A549 (cell line): ENCODE measurements at regions of chr3 and their contacts with region 1.

Region 1: GRCh38 chr3:149180057-149180573 is 41.5 kb downstream of the CP start:
- DNase-seq: peak; percentile 93 to 99
- ATAC-seq: peak; percentile 97
- H3K4me3 ChIP-seq: no peak overlapping the region
- H3K27ac ChIP-seq: peak overlapping the region; percentile 78 to 86
- H3K4me1 ChIP-seq: peaks cover 28% of the 10 kb centered on the region
- CTCF ChIP-seq: no peak
- EP300 ChIP-seq: peak; percentile 87 to 93; a peak in 4 of 5 replicates
- POLR2A ChIP-seq: no peak
- RAD21 ChIP-seq: peak in 1 of 2 experiments; percentile 51; a peak in 3 of 5 replicates

Region 2: GRCh38 chr3:148971401-148972163 is 208.5 kb before region 1 on chr3:
- CTCF ChIA-PET with region 1: no interaction called
- POLR2A ChIA-PET with region 1: no interaction called
- DNase-seq: no peak
- ATAC-seq: no peak
- H3K4me3 ChIP-seq: no peak overlapping the region
- H3K27ac ChIP-seq: no peak overlapping the region
- H3K4me1 ChIP-seq: no peaks in the 10 kb centered on the region
- CTCF ChIP-seq: no peak
- EP300 ChIP-seq: no peak
- POLR2A ChIP-seq: no peak
- RAD21 ChIP-seq: no peak

Region 3: DNA sequence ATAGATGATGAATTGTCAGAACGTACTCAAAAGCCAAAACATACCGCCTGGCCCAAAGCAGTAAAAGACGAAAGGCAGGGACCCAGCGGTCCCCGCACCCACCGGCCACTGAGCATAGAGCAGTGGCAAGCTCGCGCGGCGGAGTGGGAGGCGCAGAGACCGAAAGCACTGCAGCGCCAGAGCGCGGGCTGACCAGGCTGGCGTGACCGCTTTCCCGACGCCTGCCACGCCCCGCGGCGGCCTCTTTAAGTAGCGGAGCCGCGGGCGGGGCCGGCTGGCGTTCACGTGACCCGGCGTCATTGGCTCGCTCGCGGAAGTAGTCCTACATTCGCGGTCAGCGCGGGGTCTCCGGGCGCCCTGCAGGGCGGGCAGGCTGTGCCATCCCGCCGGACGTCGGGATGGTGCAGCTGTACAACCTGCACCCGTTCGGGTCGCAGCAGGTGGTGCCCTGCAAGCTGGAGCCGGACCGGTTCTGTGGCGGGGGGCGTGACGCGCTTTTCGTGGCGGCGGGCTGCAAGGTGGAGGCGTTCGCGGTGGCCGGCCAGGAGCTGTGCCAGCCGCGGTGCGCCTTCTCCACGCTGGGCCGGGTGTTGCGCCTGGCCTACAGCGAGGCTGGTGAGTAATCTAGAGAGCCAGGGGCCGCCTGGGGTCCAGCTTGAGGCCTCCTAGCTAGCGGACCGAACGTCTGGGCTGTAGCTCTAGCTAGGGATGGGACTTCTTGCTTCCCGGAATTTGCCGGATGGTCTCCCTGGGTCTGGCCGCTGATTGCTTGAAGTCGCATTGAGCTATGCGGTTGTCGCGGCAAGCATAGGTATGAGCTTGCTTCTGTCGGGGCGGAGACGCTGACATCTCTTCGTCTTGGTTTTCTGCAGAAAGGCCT is 50.5 kb before region 1 on chr3 and contains the start of gene HPS3:
- CTCF ChIA-PET with region 1: no interaction called
- POLR2A ChIA-PET with region 1: interaction called, 17 read pairs
- DNase-seq: peak; percentile 82 to 91
- ATAC-seq: peak; percentile 95 to 97
- H3K4me3 ChIP-seq: peak within 1 kb of the TSS; percentile 78
- H3K27ac ChIP-seq: peak within 1 kb of the TSS; percentile 79 to 89
- H3K4me1 ChIP-seq: peaks cover 39% of the 10 kb centered on the region
- CTCF ChIP-seq: no peak
- EP300 ChIP-seq: no peak
- POLR2A ChIP-seq: peak; percentile 89
- RAD21 ChIP-seq: peak in 1 of 2 experiments; percentile 17; a peak in 1 of 5 replicates
- polyA plus RNA-seq, gene HPS3: 48.0 and 48.8 TPM in 2 replicates

Region 4: DNA sequence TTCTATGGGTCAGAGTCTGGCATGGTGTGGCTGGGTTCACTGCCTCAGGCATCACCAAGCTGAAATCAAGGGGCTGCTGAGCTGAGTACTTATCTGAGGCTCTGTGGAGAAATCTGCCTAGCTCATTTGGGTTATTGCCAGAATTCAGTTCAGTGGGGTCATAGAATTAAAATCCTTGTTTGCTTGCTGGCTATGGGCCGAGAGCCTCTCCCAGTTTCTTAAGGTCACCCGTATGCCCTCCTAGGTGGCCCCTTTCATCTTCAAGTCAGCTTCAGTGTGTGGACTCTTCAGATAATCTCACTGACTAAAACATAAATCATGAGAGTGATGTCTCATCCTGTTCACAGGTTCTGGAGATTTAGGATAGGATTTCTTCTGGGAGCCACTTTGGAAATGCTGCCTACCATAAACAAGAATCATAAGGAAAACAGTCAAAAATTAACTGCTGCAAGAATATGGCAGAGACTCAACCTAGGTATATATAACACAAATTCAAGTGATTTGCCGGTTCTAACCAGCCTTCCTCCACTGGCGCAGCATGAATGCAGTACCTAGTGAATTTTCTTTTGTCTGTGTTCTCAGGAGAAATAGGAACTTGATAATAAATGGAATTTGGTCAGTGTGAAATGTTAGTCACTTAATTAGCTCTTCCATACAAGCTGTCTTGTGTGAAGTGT is 36.2 kb after region 1 on chr3:
- CTCF ChIA-PET with region 1: no interaction called
- POLR2A ChIA-PET with region 1: interaction called, 13 read pairs
- DNase-seq: peak in 1 of 2 experiments; percentile 93
- ATAC-seq: peak; percentile 82 to 91
- H3K4me3 ChIP-seq: no peak overlapping the region
- H3K27ac ChIP-seq: peak overlapping the region; percentile 62 to 86
- H3K4me1 ChIP-seq: peaks cover 43% of the 10 kb centered on the region
- CTCF ChIP-seq: no peak
- EP300 ChIP-seq: peak; percentile 80 to 92; a peak in 3 of 5 replicates
- POLR2A ChIP-seq: no peak
- RAD21 ChIP-seq: peak in 1 of 2 experiments; percentile 48; a peak in 2 of 5 replicates